ENCODE measurements at regions of chr3 and their contacts with region 1.

Region 1: GRCh38 chr3:129112308-129113052 is 9.1 kb downstream of the RAB43 start:
- DNase-seq: peak; percentile 60
- H3K4me3 Mint-ChIP-seq: peak overlapping the region; percentile 30
- H3K27ac Mint-ChIP-seq: peak overlapping the region; percentile 92
- H3K4me1 Mint-ChIP-seq: peaks cover 80% of the 10 kb centered on the region
- H3K27me3 Mint-ChIP-seq: no peaks in the 10 kb centered on the region

Region 2: DNA sequence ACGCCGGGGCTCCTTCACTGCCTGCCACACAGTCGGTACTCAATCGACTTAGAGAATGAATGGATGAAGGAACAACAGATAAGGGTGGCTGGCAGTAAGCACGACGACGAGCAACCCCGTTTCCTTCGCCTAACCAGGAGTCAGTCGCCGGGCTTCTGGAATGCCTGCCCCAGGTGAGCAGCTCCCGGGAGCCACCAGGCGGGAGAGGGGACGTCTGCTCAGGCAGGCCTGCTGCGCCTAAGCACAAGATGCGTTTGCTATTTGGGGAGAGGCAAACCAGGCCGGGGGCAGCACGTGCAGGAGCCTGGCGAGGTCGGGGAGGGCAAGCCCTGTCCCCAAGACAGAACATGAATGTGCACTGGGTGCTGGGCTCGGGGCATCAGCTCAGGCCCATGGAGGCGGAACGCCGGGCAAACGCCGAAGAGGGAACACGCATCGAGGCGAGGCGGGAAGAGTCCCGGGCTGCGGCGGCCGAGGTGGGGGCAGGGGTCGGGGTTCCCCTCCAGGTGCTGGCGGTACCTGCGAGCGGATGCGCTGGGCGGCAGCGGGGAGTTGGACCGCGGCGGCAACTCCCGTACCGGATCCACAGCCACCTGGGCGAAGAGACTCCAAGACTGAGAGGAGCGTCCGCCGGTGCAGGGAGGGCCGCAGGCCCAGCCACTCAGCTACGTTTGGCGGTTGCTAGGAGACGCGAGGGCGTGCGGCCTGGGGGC is 118.9 kb before region 1 on chr3 and contains the start of gene CFAP92:
- CTCF ChIA-PET with region 1: no interaction called
- DNase-seq: peak; percentile 96
- H3K4me3 Mint-ChIP-seq: peak within 1 kb of the TSS; percentile 62
- H3K27ac Mint-ChIP-seq: no peak within 1 kb of the TSS
- H3K4me1 Mint-ChIP-seq: peaks cover 31% of the 10 kb centered on the region
- H3K27me3 Mint-ChIP-seq: peaks cover 38% of the 10 kb centered on the region

Region 3: GRCh38 chr3:129058441-129059200 is 53.9 kb before region 1 on chr3:
- CTCF ChIA-PET with region 1: interaction called, 10 read pairs
- DNase-seq: no peak
- H3K4me3 Mint-ChIP-seq: no peak overlapping the region
- H3K27ac Mint-ChIP-seq: no peak overlapping the region
- H3K4me1 Mint-ChIP-seq: peaks cover 6% of the 10 kb centered on the region
- H3K27me3 Mint-ChIP-seq: peaks cover 31% of the 10 kb centered on the region